Calu3 (cell line): ENCODE measurements at regions of chr14 and their contacts with region 1.

Region 1: DNA sequence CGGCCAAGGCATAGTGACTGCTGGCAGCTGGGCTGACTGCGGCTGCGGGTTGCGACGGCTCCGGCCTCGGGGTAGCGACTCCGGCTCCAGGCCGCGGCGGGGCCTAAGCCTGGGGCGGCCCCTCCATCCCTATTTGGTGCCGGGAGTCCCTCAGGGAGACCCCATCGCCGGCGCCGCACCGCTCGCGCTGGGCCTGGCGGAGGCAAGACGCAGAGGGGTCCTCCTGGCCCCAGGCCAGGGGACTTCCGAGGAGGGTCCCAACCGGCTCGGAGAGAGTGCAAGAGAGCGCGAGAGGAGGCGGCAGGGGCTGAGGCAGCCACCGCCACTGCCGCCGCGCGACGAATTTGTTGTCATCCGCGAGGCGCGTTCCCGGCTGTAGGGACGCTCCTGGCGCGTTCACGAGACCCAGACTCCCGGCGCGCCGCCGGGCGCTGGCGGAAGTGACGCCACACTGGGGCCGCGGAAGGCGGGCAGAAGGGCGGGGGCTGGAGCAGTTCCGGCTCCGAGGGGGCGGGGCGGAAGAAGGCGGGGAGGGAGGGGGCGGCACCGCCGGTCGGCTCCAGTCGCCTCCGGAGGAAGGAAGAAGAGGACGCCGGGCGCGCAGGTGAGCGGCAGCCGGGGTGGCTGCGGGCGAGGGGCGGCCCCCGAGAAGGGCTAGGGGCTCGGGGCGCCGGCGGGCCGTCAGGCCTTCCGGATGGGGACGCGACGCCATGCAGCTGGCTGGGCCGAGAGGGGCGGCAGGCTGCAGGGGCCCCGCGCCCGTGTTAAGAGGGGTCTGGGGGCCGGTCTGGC is at the starts of genes ATG2B and GSKIP:
- DNase-seq: peak; percentile 95
- H3K4me3 Mint-ChIP-seq: peak within 1 kb of the TSS; percentile 90
- H3K27ac Mint-ChIP-seq: peak within 1 kb of the TSS; percentile 86
- H3K4me1 Mint-ChIP-seq: peaks cover 13% of the 10 kb centered on the region
- H3K27me3 Mint-ChIP-seq: no peaks in the 10 kb centered on the region
- CTCF ChIP-seq: no peak
- total RNA-seq, gene ATG2B: 13.0 and 14.5 TPM in 2 replicates
- total RNA-seq, gene GSKIP: 33.3 and 42.5 TPM in 2 replicates

Region 2: DNA sequence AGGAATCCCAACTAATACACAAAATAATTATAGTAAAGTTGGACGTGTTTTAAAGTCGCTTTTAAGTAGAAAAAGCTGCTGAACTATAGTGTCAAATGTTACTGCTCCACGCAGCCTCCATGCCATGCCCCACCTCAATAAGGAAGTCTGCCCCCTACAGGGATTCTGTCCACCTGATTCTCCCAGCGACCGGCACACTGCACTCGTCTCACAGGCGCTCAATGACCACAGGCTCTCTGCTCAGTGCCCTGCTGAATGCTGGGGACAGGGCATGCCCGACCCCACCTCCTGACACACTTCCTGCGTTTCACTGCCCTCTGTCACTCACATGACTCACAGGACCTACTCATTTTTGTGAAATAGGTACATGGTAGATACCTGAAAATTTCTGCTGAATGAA is 58.2 kb before region 1 on chr14:
- CTCF ChIA-PET with region 1: no interaction called
- intact Hi-C with region 1: loop called (anchors 5 kb)
- DNase-seq: peak; percentile 6
- H3K4me3 Mint-ChIP-seq: no peak overlapping the region
- H3K27ac Mint-ChIP-seq: no peak overlapping the region
- H3K4me1 Mint-ChIP-seq: peaks cover 22% of the 10 kb centered on the region
- H3K27me3 Mint-ChIP-seq: no peaks in the 10 kb centered on the region
- CTCF ChIP-seq: no peak

Region 3: GRCh38 chr14:96391293-96392118 is 28.3 kb after region 1 on chr14:
- CTCF ChIA-PET with region 1: no interaction called
- intact Hi-C with region 1: loop called (anchors 2 kb)
- DNase-seq: peak; percentile 99
- H3K4me3 Mint-ChIP-seq: peak overlapping the region; percentile 88
- H3K27ac Mint-ChIP-seq: peak overlapping the region; percentile 61
- H3K4me1 Mint-ChIP-seq: no peaks in the 10 kb centered on the region
- H3K27me3 Mint-ChIP-seq: no peaks in the 10 kb centered on the region
- CTCF ChIP-seq: no peak